WTC11 (cell line): ENCODE measurements at regions of chr22 and their contacts with region 1.

Region 1: GRCh38 chr22:19554834-19555404 is 30.7 kb upstream of the CLDN5 start:
- DNase-seq: peak; percentile 74
- ATAC-seq: peak; percentile 97
- H3K4me3 Mint-ChIP-seq: no peak overlapping the region
- H3K27ac Mint-ChIP-seq: 0 out of 2 replicates have a peak overlapping the region, but pooled peaks have one; percentile 27
- H3K4me1 Mint-ChIP-seq: peaks cover 14% of the 10 kb centered on the region
- H3K27me3 Mint-ChIP-seq: no peaks in the 10 kb centered on the region; the same call in 1 of the 2 replicates
- CTCF ChIP-seq: no peak

Region 2: GRCh38 chr22:19523240-19524169 is 31.4 kb before region 1 on chr22:
- CTCF ChIA-PET with region 1: interaction called, 12 read pairs
- POLR2A ChIA-PET with region 1: no interaction called
- DNase-seq: peak; percentile 70
- ATAC-seq: peak; percentile 55
- H3K4me3 Mint-ChIP-seq: peak overlapping the region; percentile 76
- H3K27ac Mint-ChIP-seq: no peak overlapping the region
- H3K4me1 Mint-ChIP-seq: peaks cover 11% of the 10 kb centered on the region
- H3K27me3 Mint-ChIP-seq: peaks cover 52% of the 10 kb centered on the region
- CTCF ChIP-seq: no peak

Region 3: DNA sequence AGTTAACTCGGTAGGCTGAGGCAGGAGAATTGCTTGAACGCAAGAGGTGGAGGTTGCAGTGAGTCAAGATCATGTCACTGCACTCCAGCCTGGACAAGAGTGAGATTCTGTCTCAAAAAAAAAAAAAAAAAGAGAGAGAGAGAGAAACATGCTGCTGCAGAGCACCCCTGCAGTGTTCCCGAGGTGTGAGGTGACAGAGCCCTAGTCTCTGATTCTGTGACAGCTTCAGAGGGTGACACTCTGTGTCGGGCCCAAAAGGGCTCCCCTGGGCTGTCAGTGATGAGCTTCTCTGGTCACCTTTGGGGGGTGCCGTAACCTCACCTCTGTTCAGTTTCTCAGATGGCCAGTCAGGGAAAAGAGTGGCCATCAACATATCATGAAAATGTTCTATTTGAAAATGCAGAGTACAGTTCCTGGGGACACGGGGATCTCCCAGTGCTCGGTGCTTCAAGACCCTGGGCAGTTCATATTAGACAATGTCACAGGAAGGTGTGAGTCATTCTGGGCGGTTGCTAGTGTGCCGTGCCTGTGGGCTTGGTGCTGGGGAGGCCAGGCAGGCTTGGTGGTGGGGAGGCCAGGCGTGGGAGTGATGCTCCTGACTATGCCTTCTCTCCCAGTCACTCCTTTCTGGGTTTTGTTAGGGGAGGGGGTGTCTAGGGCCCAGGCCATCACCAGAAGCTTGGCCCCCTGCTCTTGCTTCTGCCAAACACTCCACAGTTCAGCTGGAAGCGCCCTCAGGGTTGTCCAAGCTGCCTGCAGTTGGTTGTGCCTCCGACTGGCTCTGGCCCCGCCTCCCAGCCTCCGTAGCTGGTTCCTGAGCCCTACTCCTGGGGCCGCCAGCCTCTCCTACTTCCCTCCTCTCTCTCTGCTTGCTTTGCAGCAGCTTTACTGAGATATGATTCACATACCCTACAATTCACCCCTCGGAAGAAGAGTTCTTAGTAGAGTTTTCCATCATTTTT is 21.8 kb after region 1 on chr22:
- CTCF ChIA-PET with region 1: interaction called, 11 read pairs
- POLR2A ChIA-PET with region 1: no interaction called
- DNase-seq: no peak
- ATAC-seq: peak; percentile 82
- H3K4me3 Mint-ChIP-seq: no peak overlapping the region
- H3K27ac Mint-ChIP-seq: no peak overlapping the region
- H3K4me1 Mint-ChIP-seq: peaks cover 10% of the 10 kb centered on the region
- H3K27me3 Mint-ChIP-seq: no peaks in the 10 kb centered on the region; the same call in 1 of the 2 replicates
- CTCF ChIP-seq: no peak

Region 4: GRCh38 chr22:19586922-19587684 is 32.2 kb after region 1 on chr22:
- CTCF ChIA-PET with region 1: no interaction called
- POLR2A ChIA-PET with region 1: no interaction called
- DNase-seq: no peak
- ATAC-seq: no peak
- H3K4me3 Mint-ChIP-seq: no peak overlapping the region
- H3K27ac Mint-ChIP-seq: no peak overlapping the region
- H3K4me1 Mint-ChIP-seq: no peaks in the 10 kb centered on the region
- H3K27me3 Mint-ChIP-seq: no peaks in the 10 kb centered on the region
- CTCF ChIP-seq: no peak